ENCODE measurements at regions of chr4 and their contacts with region 1.

Region 1: GRCh38 chr4:123396307-123397143 is at the start of gene SPRY1:
- DNase-seq: peak; percentile 86
- H3K4me3 ChIP-seq: peak within 1 kb of the TSS; percentile 87
- H3K27ac ChIP-seq: peak within 1 kb of the TSS; percentile 95
- H3K4me1 ChIP-seq: peaks cover 56% of the 10 kb centered on the region
- H3K27me3 ChIP-seq: no peaks in the 10 kb centered on the region
- CTCF ChIP-seq: no peak
- total RNA-seq, gene SPRY1: 39.7 TPM

Region 2: GRCh38 chr4:123127218-123127617 is 269.3 kb before region 1 on chr4:
- intact Hi-C with region 1: loop called (anchors 10 kb)
- DNase-seq: no peak
- H3K4me3 ChIP-seq: no peak overlapping the region
- H3K27ac ChIP-seq: peak overlapping the region; percentile 3
- H3K4me1 ChIP-seq: peaks cover 16% of the 10 kb centered on the region
- H3K27me3 ChIP-seq: no peaks in the 10 kb centered on the region
- CTCF ChIP-seq: peak; percentile 61

Region 3: GRCh38 chr4:123461996-123462395 is 65.5 kb after region 1 on chr4:
- intact Hi-C with region 1: no loop called
- DNase-seq: no peak
- H3K4me3 ChIP-seq: no peak overlapping the region
- H3K27ac ChIP-seq: no peak overlapping the region
- H3K4me1 ChIP-seq: no peaks in the 10 kb centered on the region
- H3K27me3 ChIP-seq: no peaks in the 10 kb centered on the region
- CTCF ChIP-seq: no peak

Region 4: GRCh38 chr4:123661080-123661737 is 264.7 kb after region 1 on chr4:
- intact Hi-C with region 1: loop called (anchors 10 kb)
- DNase-seq: no peak
- H3K4me3 ChIP-seq: no peak overlapping the region
- H3K27ac ChIP-seq: no peak overlapping the region
- H3K4me1 ChIP-seq: no peaks in the 10 kb centered on the region
- H3K27me3 ChIP-seq: no peaks in the 10 kb centered on the region
- CTCF ChIP-seq: peak; percentile 67

Measured in left ventricle myocardium inferior (tissue), 1 donor.